ENCODE measurements at regions of chr12 and their contacts with region 1.

Region 1: DNA sequence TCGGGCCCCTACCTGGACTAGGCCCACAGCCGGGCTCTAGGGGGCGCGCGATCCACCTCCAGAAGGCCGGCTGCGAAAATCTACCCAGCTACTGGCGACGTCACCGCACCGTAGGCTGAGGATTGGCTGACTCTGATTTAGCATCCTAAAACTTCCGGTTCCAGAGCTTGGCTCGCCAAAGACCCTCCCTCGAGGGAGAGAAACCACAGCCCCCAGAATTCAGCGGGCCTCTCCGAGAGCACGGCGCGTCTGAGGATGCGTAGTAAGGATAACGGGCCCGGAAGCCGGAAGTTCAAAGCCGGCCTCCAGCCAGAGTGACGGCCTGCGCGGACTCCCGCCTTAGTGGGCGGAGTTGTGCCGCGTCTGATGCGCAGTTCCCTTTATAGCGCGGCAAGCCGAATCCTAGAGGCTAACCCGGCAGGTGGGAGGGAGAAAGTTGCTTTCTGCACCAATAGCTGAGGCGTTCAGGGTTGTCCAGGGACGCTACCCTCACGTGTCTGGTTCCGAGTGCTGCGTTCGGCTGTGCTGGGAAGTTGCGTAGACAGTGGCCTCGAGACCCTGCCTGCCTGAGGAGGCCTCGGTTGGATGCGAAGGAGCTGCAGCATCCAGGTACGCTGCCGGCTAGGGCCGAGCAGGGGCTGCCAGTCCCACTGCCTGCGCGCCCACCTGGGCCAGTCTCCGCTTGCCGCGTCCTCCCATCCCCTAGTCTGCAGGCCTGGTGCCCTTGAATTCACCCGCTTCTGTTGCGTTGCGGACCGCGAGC is at the start of gene COX14:
- DNase-seq: peak; percentile 99
- ATAC-seq: peak; percentile 89 to 94 (median 92)
- H3K4me3 ChIP-seq: peak within 1 kb of the TSS; percentile 66 to 99 (median 89)
- H3K27ac ChIP-seq: peak within 1 kb of the TSS; percentile 90 to 100 (median 96)
- H3K4me1 ChIP-seq: peaks cover 0 to 62% (median 48%) of the 10 kb centered on the region in 12 donors
- H3K27me3 ChIP-seq: no peaks in the 10 kb centered on the region
- CTCF ChIP-seq: peak; percentile 87 to 99 (median 94)
- POLR2A ChIP-seq: peak in 1 of 2 donors; percentile 97
- total RNA-seq, gene COX14: 134 to 217 (median 154) TPM

Region 2: GRCh38 chr12:49730568-49731101 is 381.2 kb before region 1 on chr12:
- intact Hi-C with region 1: no loop called
- DNase-seq: no peak
- ATAC-seq: no peak
- H3K4me3 ChIP-seq: no peak overlapping the region
- H3K27ac ChIP-seq: no peak overlapping the region
- H3K4me1 ChIP-seq: no peaks in the 10 kb centered on the region
- H3K27me3 ChIP-seq: no peaks in the 10 kb centered on the region
- CTCF ChIP-seq: no peak
- POLR2A ChIP-seq: no peak

Region 3: GRCh38 chr12:50084775-50085614 is 26.9 kb before region 1 on chr12 and contains the start of gene SMARCD1:
- intact Hi-C with region 1: loop called in 2 of 10 experiments (anchors 1 to 2 kb)
- DNase-seq: peak; percentile 92 to 97 (median 95)
- ATAC-seq: peak; percentile 95 to 97 (median 96)
- H3K4me3 ChIP-seq: peak within 1 kb of the TSS; percentile 80 to 99 (median 94)
- H3K27ac ChIP-seq: peak within 1 kb of the TSS; percentile 90 to 100 (median 98)
- H3K4me1 ChIP-seq: peaks cover 0 to 29% (median 14%) of the 10 kb centered on the region in 12 donors
- H3K27me3 ChIP-seq: no peaks in the 10 kb centered on the region
- CTCF ChIP-seq: peak in 10 of 12 donors; percentile 19 to 83 (median 66)
- POLR2A ChIP-seq: no peak
- total RNA-seq, gene SMARCD1: 13.6 to 35.7 (median 22.0) TPM